ENCODE measurements at regions of chr1 and their contacts with region 1.

Region 1: GRCh38 chr1:155989242-155990004 is 11.1 kb upstream of the ARHGEF2 start:
- DNase-seq: peak; percentile 77 to 84 (median 79)
- H3K4me3 ChIP-seq: no peak overlapping the region
- H3K4me3 Mint-ChIP-seq: peak overlapping the region in 1 of 8 donors; percentile 63
- H3K27ac ChIP-seq: no peak overlapping the region
- H3K27ac Mint-ChIP-seq: peak overlapping the region in 2 of 7 donors; percentile 19 to 91
- H3K4me1 ChIP-seq: peaks cover 12% of the 10 kb centered on the region
- H3K4me1 Mint-ChIP-seq: peaks cover 6 to 16% (median 8%) of the 10 kb centered on the region in 4 donors
- H3K27me3 ChIP-seq: no peaks in the 10 kb centered on the region
- H3K27me3 Mint-ChIP-seq: no peaks in the 10 kb centered on the region

Region 2: DNA sequence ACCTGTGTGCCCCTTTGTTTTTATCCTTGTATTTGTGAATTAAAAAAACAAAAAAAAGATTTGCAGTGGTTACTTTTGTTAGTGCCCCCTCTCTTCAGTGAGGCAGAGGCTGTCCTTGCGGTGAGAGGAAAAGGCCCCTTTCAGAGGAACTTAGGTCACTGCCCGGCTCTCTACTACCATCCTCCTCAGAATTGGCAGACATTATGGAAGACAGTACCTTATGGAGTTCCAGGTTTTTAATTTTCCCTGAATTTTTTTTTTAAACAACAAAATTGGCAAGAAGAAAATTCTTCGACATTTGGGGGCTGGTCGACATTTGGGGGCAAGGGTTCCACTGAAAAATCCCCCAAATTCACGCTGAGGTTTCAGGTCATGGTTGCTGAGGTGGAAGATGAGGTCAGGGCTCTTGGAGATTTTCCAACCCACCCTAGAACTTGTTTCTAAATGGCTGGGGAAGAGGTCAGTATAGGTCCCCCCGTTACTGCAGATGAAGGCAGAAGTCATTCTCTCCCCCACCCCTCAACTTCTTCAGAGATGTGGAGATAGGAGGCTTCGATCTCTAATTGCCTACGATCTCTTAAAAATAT is 42.7 kb before region 1 on chr1:
- CTCF ChIA-PET with region 1: interaction called, 10 read pairs
- POLR2A ChIA-PET with region 1: interaction called, 179 read pairs
- intact Hi-C with region 1: no loop called
- DNase-seq: no peak
- H3K4me3 ChIP-seq: no peak overlapping the region
- H3K4me3 Mint-ChIP-seq: peak overlapping the region in 6 of 8 donors; percentile 36 to 82 (median 54)
- H3K27ac ChIP-seq: peak overlapping the region; percentile 48
- H3K27ac Mint-ChIP-seq: peak overlapping the region; percentile 84 to 95 (median 91)
- H3K4me1 ChIP-seq: peaks cover 36% of the 10 kb centered on the region
- H3K4me1 Mint-ChIP-seq: peaks cover 15 to 45% (median 33%) of the 10 kb centered on the region in 4 donors
- H3K27me3 ChIP-seq: no peaks in the 10 kb centered on the region
- H3K27me3 Mint-ChIP-seq: no peaks in the 10 kb centered on the region

Region 3: DNA sequence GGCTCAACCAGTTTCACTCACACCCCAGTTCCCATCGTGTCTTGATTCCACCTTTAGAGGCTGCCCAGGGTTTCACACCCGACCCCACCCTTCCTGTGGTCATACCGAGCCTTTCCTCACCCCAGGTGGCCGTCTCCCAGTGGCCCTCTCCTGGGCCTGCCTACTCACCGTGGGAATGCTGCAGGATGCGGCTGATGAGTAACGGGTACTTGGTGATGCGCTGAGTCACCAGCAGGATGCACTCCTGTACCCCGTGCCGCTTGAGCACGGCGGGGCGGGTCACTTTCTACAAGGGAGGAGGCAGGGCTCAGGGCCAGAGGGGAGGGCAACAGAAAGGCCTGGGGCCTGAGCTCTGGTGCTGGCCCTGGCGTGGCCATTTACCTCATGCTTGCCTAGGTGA is 27.5 kb before region 1 on chr1:
- CTCF ChIA-PET with region 1: interaction called, 13 read pairs
- POLR2A ChIA-PET with region 1: interaction called, 9 read pairs
- intact Hi-C with region 1: loop called (anchors 2 kb)
- DNase-seq: no peak
- H3K4me3 ChIP-seq: no peak overlapping the region
- H3K4me3 Mint-ChIP-seq: no peak overlapping the region
- H3K27ac ChIP-seq: peak overlapping the region; percentile 38
- H3K27ac Mint-ChIP-seq: peak overlapping the region in 6 of 7 donors; percentile 57 to 78 (median 76)
- H3K4me1 ChIP-seq: peaks cover 19% of the 10 kb centered on the region
- H3K4me1 Mint-ChIP-seq: peaks cover 9 to 33% (median 17%) of the 10 kb centered on the region in 4 donors
- H3K27me3 ChIP-seq: no peaks in the 10 kb centered on the region
- H3K27me3 Mint-ChIP-seq: no peaks in the 10 kb centered on the region

Region 4: GRCh38 chr1:155970531-155971167 is 18.8 kb before region 1 on chr1:
- CTCF ChIA-PET with region 1: interaction called, 47 read pairs
- POLR2A ChIA-PET with region 1: interaction called, 9 read pairs
- intact Hi-C with region 1: loop called (anchors 2 kb)
- DNase-seq: no peak
- H3K4me3 ChIP-seq: no peak overlapping the region
- H3K4me3 Mint-ChIP-seq: peak overlapping the region; percentile 66 to 88 (median 74)
- H3K27ac ChIP-seq: peak overlapping the region; percentile 44
- H3K27ac Mint-ChIP-seq: peak overlapping the region; percentile 81 to 96 (median 93)
- H3K4me1 ChIP-seq: peaks cover 96% of the 10 kb centered on the region
- H3K4me1 Mint-ChIP-seq: peaks cover 73 to 98% (median 88%) of the 10 kb centered on the region in 4 donors
- H3K27me3 ChIP-seq: no peaks in the 10 kb centered on the region
- H3K27me3 Mint-ChIP-seq: no peaks in the 10 kb centered on the region

Measured in CD4-positive, alpha-beta memory T cell (primary cell).